A549 (cell line): ENCODE measurements at regions of chr15 and their contacts with region 1.

Region 1: GRCh38 chr15:45205192-45205591 is 17.4 kb upstream of the SHF start:
- DNase-seq: peak; percentile 55 to 72
- ATAC-seq: peak; percentile 33 to 58; a peak in 3 of 6 replicates
- H3K4me3 ChIP-seq: no peak overlapping the region
- H3K27ac ChIP-seq: no peak overlapping the region
- H3K4me1 ChIP-seq: no peaks in the 10 kb centered on the region
- CTCF ChIP-seq: peak; percentile 67
- EP300 ChIP-seq: no peak
- POLR2A ChIP-seq: no peak
- RAD21 ChIP-seq: peak; percentile 74 to 84

Region 2: GRCh38 chr15:45221967-45222366 is 16.8 kb after region 1 on chr15:
- CTCF ChIA-PET with region 1: interaction called, 25 read pairs
- POLR2A ChIA-PET with region 1: no interaction called
- DNase-seq: no peak
- ATAC-seq: no peak
- H3K4me3 ChIP-seq: no peak overlapping the region
- H3K27ac ChIP-seq: no peak overlapping the region
- H3K4me1 ChIP-seq: 0 out of 3 replicates have a peak, but pooled peaks cover 3% of the 10 kb centered on the region
- CTCF ChIP-seq: no peak
- EP300 ChIP-seq: no peak
- POLR2A ChIP-seq: no peak
- RAD21 ChIP-seq: no peak

Region 3: DNA sequence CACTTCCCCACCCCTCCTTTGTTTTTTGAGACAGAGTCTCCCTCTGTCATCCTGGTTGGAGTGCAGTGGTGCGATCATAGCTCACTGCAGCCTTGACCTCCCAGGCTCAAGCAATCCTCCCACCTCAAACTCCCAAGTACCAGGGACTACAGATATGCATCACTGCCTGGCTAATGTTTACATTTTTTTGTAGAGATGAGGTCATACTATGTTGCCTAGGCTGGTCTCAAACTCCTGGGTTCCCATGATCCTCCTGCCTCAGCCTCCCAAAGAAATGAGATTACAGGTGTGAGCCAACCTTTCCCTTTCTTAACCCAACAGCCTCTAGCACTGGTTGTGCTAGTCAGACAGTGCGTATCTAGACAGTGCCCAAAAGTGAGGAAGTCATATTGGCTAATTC is 179.5 kb after region 1 on chr15:
- CTCF ChIA-PET with region 1: interaction called, 10 read pairs
- POLR2A ChIA-PET with region 1: no interaction called
- DNase-seq: no peak
- ATAC-seq: no peak
- H3K4me3 ChIP-seq: no peak overlapping the region
- H3K27ac ChIP-seq: no peak overlapping the region
- H3K4me1 ChIP-seq: peaks cover 7% of the 10 kb centered on the region; the same call in 2 of the 3 replicates
- CTCF ChIP-seq: no peak
- EP300 ChIP-seq: no peak
- POLR2A ChIP-seq: no peak
- RAD21 ChIP-seq: no peak